Prostate gland (tissue), 2 donors: ENCODE measurements at regions of chr6 and their contacts with region 1.

Region 1: DNA sequence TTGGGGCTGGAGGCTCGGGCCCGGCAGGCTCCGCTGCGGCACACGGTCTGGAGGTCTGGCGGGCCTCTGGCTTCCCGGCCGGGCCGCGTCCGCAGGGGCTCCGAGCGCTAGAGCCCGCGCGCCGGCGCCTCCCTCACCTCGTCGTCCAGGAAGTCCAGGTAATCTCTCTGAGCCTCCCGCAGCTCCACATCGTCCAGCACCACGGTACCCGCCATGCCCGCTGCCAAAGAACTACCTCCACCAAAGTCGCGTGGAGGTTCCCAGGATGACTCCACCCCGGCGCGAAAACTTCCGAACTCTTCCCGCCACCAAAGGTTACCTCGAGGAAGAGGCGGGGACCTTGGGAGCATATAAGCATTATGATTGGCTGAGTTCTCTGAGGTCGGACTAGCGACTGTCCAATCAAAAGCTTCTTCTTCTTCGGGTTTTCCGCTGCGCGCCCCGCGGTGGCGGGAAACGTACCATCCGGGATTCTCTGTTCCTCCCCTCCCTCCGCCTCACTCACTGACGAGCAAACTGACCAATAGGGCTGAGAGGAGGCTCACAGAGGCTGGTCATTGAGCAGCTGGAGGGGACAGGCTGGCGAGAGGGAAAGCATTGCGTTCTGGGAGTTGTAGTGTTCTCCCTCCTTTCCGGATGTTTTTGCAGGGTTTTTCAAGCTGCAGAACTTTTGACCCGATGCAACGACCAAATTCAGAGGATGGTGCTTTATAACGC is at the start of gene MCM3:
- DNase-seq: peak; percentile 98
- H3K4me3 ChIP-seq: peak within 1 kb of the TSS; percentile 63 to 67
- H3K27ac ChIP-seq: peak within 1 kb of the TSS; percentile 45 to 51
- H3K4me1 ChIP-seq: no peaks in the 10 kb centered on the region
- H3K27me3 ChIP-seq: no peaks in the 10 kb centered on the region
- CTCF ChIP-seq: peak in 2 of 4 experiments; percentile 49 to 62
- POLR2A ChIP-seq: peak; percentile 17
- total RNA-seq, gene MCM3: 33.6 to 51.1 TPM

Region 2: GRCh38 chr6:52115891-52116604 is 168.6 kb before region 1 on chr6:
- intact Hi-C with region 1: no loop called
- DNase-seq: no peak
- H3K4me3 ChIP-seq: no peak overlapping the region
- H3K27ac ChIP-seq: no peak overlapping the region
- H3K4me1 ChIP-seq: no peaks in the 10 kb centered on the region
- H3K27me3 ChIP-seq: no peaks in the 10 kb centered on the region
- CTCF ChIP-seq: no peak
- POLR2A ChIP-seq: no peak

Region 3: GRCh38 chr6:52201046-52201445 is 83.6 kb before region 1 on chr6:
- intact Hi-C with region 1: no loop called
- DNase-seq: no peak
- H3K4me3 ChIP-seq: no peak overlapping the region
- H3K27ac ChIP-seq: no peak overlapping the region
- H3K4me1 ChIP-seq: no peaks in the 10 kb centered on the region
- H3K27me3 ChIP-seq: no peaks in the 10 kb centered on the region
- CTCF ChIP-seq: no peak
- POLR2A ChIP-seq: no peak

Region 4: GRCh38 chr6:52361945-52362442 is 77.4 kb after region 1 on chr6 and contains the start of gene PAQR8:
- intact Hi-C with region 1: loop called (anchors 1 kb)
- DNase-seq: peak; percentile 48
- H3K4me3 ChIP-seq: peak within 1 kb of the TSS; percentile 66 to 83
- H3K27ac ChIP-seq: peak within 1 kb of the TSS; percentile 70 to 71
- H3K4me1 ChIP-seq: no peaks in the 10 kb centered on the region
- H3K27me3 ChIP-seq: no peaks in the 10 kb centered on the region
- CTCF ChIP-seq: no peak
- POLR2A ChIP-seq: peak; percentile 59
- total RNA-seq, gene PAQR8: 9.9 to 15.8 TPM

Region 5: GRCh38 chr6:52399511-52400312 is 115.1 kb after region 1 on chr6:
- intact Hi-C with region 1: loop called (anchors 5 kb)
- DNase-seq: peak; percentile 26
- H3K4me3 ChIP-seq: no peak overlapping the region
- H3K27ac ChIP-seq: no peak overlapping the region
- H3K4me1 ChIP-seq: no peaks in the 10 kb centered on the region
- H3K27me3 ChIP-seq: no peaks in the 10 kb centered on the region
- CTCF ChIP-seq: peak in 3 of 4 experiments; percentile 61 to 83 (median 76)
- POLR2A ChIP-seq: no peak

Region 6: DNA sequence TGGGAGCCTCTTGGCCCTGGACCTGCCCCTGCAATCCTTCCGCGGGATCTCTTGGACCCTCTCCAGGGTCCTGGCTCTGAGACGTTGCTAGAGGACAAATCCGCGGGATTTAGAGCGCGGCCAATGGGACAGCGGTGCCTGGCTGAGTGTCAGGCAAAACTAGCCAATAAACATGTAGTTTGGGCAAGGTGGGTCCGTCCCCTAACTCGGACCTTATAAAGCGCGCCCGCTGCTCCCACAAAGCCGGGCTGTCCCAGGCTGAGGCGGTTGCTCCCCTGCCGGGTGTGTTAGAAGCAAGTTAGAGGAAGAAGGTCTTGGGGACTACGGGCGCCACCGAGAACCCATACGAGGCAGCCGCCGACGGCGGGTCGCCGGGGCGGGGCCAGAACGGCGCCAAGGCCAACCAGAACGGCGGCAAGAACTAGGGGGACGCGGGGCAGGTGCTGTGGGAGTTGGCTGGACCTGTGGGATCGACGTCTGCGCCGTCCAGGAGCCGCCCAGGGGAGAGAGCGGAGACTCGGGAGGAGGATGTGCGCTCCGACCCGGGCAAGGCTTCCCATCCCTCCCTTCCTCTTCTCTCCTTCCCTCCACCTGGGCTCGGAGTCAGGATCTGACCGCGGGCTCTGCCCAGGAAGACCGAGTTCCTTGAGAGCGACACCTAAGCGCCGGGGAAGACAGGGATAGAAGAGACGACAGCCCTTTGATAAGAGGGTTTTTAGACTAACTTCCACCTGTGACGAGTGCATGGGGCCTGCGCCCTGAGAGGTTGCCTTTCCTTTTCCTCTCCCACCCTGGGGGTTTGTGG is 379.8 kb after region 1 on chr6:
- intact Hi-C with region 1: loop called (anchors 5 kb)
- DNase-seq: peak; percentile 91
- H3K4me3 ChIP-seq: peak overlapping the region; percentile 55 to 64
- H3K27ac ChIP-seq: peak overlapping the region; percentile 39 to 75
- H3K4me1 ChIP-seq: no peaks in the 10 kb centered on the region
- H3K27me3 ChIP-seq: no peaks in the 10 kb centered on the region
- CTCF ChIP-seq: no peak
- POLR2A ChIP-seq: peak; percentile 92

Region 7: GRCh38 chr6:52686878-52687699 is 402.5 kb after region 1 on chr6:
- intact Hi-C with region 1: no loop called
- DNase-seq: no peak
- H3K4me3 ChIP-seq: no peak overlapping the region
- H3K27ac ChIP-seq: no peak overlapping the region
- H3K4me1 ChIP-seq: no peaks in the 10 kb centered on the region
- H3K27me3 ChIP-seq: no peaks in the 10 kb centered on the region
- CTCF ChIP-seq: no peak
- POLR2A ChIP-seq: no peak